Activated CD4-positive, alpha-beta memory T cell treated with anti-CD3 and anti-CD28 coated beads for 36 hours (primary cell): ENCODE measurements at regions of chr10 and their contacts with region 1.

Region 1: GRCh38 chr10:72331601-72332422 is 22.9 kb downstream of the DNAJB12 start:
- DNase-seq: peak; percentile 98
- H3K4me3 Mint-ChIP-seq: peak overlapping the region; percentile 63
- H3K27ac Mint-ChIP-seq: peak overlapping the region; percentile 99
- H3K4me1 Mint-ChIP-seq: peaks cover 85% of the 10 kb centered on the region
- H3K27me3 Mint-ChIP-seq: peaks cover 2% of the 10 kb centered on the region

Region 2: DNA sequence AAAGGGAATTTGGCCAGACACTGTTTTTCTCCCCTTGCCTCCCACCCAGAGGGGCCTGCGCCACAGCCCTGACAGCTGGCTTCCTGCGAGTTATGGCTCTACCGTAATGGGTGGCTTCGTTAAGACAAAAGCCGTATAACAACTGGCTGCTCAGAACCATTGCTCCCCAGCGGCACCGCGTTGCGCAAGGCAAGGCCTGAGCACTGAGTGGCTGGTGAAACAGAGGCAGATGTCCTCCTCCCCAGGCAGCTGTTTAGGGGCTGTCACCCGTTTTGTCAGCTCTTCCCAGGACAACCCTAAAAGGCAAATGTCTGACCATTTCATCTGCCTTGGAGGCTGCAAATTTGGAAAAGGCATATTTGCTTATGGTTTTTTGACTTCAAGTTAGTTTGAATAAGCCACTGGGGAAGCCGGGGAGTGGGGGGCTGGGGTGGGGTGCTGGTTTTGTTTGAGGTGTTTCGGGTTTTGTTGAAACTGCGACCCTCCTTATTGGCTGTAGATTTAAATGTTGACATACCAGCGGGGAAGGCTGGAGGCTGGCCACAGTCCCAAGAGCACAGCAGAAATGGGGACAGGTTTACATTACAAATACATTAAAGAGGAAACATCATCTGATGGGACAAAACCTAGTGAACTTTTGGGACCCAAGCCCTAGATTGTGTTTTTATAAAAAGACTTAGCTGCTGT is 242.8 kb before region 1 on chr10:
- CTCF ChIA-PET with region 1: interaction called, 6 read pairs
- POLR2A ChIA-PET with region 1: interaction called, 7 read pairs
- intact Hi-C with region 1: loop called (anchors 2 kb)
- DNase-seq: peak; percentile 76
- H3K4me3 Mint-ChIP-seq: peak overlapping the region; percentile 100
- H3K27ac Mint-ChIP-seq: peak overlapping the region; percentile 99
- H3K4me1 Mint-ChIP-seq: peaks cover 46% of the 10 kb centered on the region
- H3K27me3 Mint-ChIP-seq: no peaks in the 10 kb centered on the region

Region 3: GRCh38 chr10:72223743-72224101 is 108.1 kb before region 1 on chr10:
- CTCF ChIA-PET with region 1: interaction called, 87 read pairs
- POLR2A ChIA-PET with region 1: interaction called, 10 read pairs
- intact Hi-C with region 1: loop called (anchors 2 kb)
- DNase-seq: peak; percentile 41
- H3K4me3 Mint-ChIP-seq: no peak overlapping the region
- H3K27ac Mint-ChIP-seq: peak overlapping the region; percentile 89
- H3K4me1 Mint-ChIP-seq: peaks cover 56% of the 10 kb centered on the region
- H3K27me3 Mint-ChIP-seq: no peaks in the 10 kb centered on the region

Region 4: DNA sequence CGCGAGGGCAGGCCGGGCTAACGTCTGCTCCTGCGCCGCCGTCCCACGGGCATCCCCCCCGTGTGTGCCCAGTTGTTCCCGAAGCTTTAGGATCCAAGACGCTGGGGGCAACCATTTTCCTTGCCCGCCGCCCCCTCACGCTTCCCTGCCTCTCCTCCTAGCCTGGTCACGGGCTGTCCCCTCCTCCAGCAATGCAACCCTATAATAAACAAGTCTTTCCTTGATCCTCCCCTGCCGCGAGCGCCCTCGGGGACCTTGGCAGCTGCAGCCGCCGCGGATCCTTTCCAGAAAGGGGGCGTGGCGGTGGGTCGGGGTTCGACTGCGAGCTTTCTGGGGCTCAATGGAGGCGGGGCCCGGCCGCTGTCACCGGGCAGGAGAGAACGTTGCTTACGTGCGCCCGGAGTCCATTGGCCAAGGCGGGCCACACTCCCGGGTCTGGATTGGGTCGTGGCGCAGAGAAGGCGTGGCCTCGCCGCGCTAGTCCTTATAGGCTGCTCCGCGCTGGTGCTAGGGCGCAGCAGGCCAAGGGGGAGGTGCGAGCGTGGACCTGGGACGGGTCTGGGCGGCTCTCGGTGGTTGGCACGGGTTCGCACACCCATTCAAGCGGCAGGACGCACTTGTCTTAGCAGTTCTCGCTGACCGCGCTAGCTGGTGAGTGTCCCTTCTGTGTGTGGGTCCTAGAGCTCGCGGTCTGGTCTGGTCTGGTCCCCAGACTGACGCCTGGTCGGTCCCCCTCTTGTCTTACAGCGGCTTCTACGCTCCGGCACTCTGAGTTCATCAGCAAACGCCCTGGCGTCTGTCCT is 58.2 kb before region 1 on chr10 and contains the start of gene DDIT4:
- CTCF ChIA-PET with region 1: interaction called, 183 read pairs
- POLR2A ChIA-PET with region 1: interaction called, 240 read pairs
- intact Hi-C with region 1: loop called (anchors 1 kb)
- DNase-seq: peak; percentile 99
- H3K4me3 Mint-ChIP-seq: peak within 1 kb of the TSS; percentile 99
- H3K27ac Mint-ChIP-seq: peak within 1 kb of the TSS; percentile 97
- H3K4me1 Mint-ChIP-seq: peaks cover 46% of the 10 kb centered on the region
- H3K27me3 Mint-ChIP-seq: peaks cover 5% of the 10 kb centered on the region
- total RNA-seq, gene DDIT4: 637 TPM

Region 5: DNA sequence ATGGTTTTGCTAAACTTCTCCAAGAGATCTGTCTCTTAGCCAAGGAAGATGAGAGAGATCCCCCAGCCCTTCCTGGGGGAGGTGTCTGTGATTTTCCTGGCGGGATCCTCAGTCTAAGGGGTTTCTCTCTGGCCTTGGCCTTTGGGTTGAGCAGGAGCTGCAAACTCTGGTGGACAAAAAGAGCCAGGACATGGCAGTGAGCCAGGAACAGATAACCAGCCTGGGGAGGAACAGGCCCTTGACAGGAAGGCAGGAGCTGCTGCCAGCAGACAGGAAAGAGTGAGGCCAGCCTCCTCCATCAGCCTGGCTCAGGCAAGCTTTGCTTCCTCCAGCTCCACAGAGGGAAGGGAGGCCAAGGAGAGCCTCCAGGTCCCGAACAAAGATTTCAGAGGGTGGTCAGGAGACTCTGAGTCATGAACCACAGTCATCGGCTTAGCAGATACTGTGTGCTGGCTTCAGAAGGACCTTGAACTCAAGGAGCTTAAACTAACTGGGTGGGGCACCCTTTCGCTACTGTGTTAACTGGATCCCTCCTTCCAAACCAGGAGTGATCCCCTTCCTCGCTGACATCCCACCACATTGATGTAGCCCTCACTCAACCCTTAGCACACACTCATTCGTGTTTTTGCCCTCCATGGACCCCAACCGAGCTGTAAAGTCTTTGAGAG is 23.4 kb before region 1 on chr10:
- CTCF ChIA-PET with region 1: interaction called, 12 read pairs
- POLR2A ChIA-PET with region 1: interaction called, 73 read pairs
- intact Hi-C with region 1: no loop called
- DNase-seq: peak; percentile 70
- H3K4me3 Mint-ChIP-seq: no peak overlapping the region
- H3K27ac Mint-ChIP-seq: peak overlapping the region; percentile 85
- H3K4me1 Mint-ChIP-seq: peaks cover 65% of the 10 kb centered on the region
- H3K27me3 Mint-ChIP-seq: no peaks in the 10 kb centered on the region